Activated CD4-positive, alpha-beta T cell treated with anti-CD3 and anti-CD28 coated beads for 36 hours (primary cell): ENCODE measurements at regions of chr9 and their contacts with region 1.

Region 1: GRCh38 chr9:126914458-126915280 is at the start of gene RALGPS1:
- DNase-seq: peak; percentile 95
- ATAC-seq: peak; percentile 100
- H3K4me3 Mint-ChIP-seq: peak within 1 kb of the TSS; percentile 70
- H3K27ac Mint-ChIP-seq: no peak within 1 kb of the TSS
- H3K4me1 Mint-ChIP-seq: peaks cover 3% of the 10 kb centered on the region
- H3K27me3 Mint-ChIP-seq: peaks cover 14% of the 10 kb centered on the region
- total RNA-seq, gene RALGPS1: 1.2 to 2.2 TPM

Region 2: GRCh38 chr9:126722252-126723078 is 192.2 kb before region 1 on chr9:
- CTCF ChIA-PET with region 1: no interaction called
- POLR2A ChIA-PET with region 1: no interaction called
- intact Hi-C with region 1: loop called in 1 of 2 experiments (anchors 1 kb)
- DNase-seq: peak; percentile 96
- ATAC-seq: peak; percentile 73
- H3K4me3 Mint-ChIP-seq: peak overlapping the region; percentile 77
- H3K27ac Mint-ChIP-seq: peak overlapping the region; percentile 89
- H3K4me1 Mint-ChIP-seq: peaks cover 43% of the 10 kb centered on the region
- H3K27me3 Mint-ChIP-seq: no peaks in the 10 kb centered on the region

Region 3: DNA sequence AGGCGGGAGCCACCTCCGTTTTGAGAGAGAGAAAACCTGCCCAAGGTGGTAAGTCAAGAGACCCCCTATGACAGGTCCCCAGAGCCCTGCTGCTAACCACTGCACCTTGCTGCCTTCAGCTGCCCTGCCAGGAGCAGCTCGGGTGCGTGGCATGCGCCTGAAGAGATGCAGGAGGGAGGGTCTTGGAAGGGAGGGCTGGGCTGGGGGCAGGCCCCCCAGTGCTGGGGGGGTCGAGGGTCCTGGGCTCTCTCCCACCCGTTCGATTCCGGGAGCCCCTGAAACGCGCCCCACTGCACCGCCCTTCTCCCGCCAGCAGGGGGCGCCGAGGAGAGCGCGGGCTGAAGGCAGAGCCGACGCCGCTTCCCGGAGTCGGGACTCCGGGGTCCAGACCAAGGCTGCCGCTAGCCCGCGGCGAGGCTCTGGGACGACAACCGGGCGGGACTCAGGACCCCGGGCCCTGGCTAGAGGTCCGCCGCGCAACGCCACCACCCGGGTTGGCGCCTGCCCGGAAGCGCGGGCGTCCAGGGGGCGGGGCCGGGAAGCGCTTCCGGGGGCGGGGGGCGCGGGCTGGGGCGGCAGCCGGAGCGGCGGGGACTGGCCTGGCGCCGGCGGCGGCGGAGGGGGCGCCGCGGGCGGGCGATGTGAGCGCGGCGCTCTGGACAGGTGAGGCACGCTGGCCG is 54.5 kb before region 1 on chr9 and contains the start of gene ZBTB34:
- CTCF ChIA-PET with region 1: interaction called, 3 read pairs
- POLR2A ChIA-PET with region 1: no interaction called
- intact Hi-C with region 1: loop called (anchors 1 kb)
- DNase-seq: peak; percentile 84
- ATAC-seq: peak; percentile 83
- H3K4me3 Mint-ChIP-seq: peak within 1 kb of the TSS; percentile 74
- H3K27ac Mint-ChIP-seq: peak within 1 kb of the TSS; percentile 81
- H3K4me1 Mint-ChIP-seq: peaks cover 19% of the 10 kb centered on the region
- H3K27me3 Mint-ChIP-seq: no peaks in the 10 kb centered on the region
- total RNA-seq, gene ZBTB34: 4.2 to 5.0 TPM

Region 4: GRCh38 chr9:127224178-127224882 is 309.7 kb after region 1 on chr9:
- CTCF ChIA-PET with region 1: no interaction called
- POLR2A ChIA-PET with region 1: no interaction called
- intact Hi-C with region 1: loop called in 1 of 2 experiments (anchors 1 kb)
- DNase-seq: peak; percentile 93
- ATAC-seq: peak; percentile 79
- H3K4me3 Mint-ChIP-seq: peak overlapping the region; percentile 68
- H3K27ac Mint-ChIP-seq: peak overlapping the region; percentile 16
- H3K4me1 Mint-ChIP-seq: peaks cover 24% of the 10 kb centered on the region
- H3K27me3 Mint-ChIP-seq: peaks cover 15% of the 10 kb centered on the region

Region 5: DNA sequence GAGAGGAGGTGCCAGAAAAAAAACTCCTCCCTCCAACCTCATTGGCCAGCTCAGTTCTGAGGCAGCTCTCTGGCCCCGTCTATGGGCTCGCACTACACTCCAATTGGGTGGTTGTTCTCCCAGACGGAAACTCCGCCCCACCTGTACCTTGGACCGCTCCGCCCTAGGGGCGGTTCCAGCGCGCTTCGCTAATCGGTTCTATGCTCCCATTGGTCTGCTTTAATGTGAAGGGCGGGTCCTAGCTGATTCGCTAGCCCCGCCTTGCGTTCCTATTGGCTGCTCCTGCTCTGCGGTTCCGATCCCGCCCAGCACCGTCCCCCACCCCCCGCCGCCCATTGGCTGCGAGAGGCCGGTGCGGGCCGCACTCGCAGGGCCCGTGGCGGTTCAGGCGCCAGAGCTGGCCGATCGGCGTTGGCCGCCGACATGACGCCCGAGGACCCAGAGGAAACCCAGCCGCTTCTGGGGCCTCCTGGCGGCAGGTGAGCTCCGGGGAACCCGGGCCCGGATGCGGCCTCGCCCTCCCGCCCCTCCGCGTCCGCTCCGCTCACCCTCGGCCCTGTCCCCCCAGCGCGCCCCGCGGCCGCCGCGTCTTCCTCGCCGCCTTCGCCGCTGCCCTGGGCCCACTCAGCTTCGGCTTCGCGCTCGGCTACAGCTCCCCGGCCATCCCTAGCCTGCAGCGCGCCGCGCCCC is 482.3 kb after region 1 on chr9 and contains the start of gene SLC2A8:
- CTCF ChIA-PET with region 1: no interaction called
- POLR2A ChIA-PET with region 1: no interaction called
- intact Hi-C with region 1: loop called in 1 of 2 experiments (anchors 1 kb)
- DNase-seq: peak; percentile 93
- ATAC-seq: peak; percentile 96
- H3K4me3 Mint-ChIP-seq: peak within 1 kb of the TSS; percentile 58
- H3K27ac Mint-ChIP-seq: no peak within 1 kb of the TSS
- H3K4me1 Mint-ChIP-seq: peaks cover 12% of the 10 kb centered on the region
- H3K27me3 Mint-ChIP-seq: peaks cover 62% of the 10 kb centered on the region
- total RNA-seq, gene SLC2A8: 1.3 to 1.7 TPM